ENCODE measurements at regions of chr2 and their contacts with region 1.

Region 1: DNA sequence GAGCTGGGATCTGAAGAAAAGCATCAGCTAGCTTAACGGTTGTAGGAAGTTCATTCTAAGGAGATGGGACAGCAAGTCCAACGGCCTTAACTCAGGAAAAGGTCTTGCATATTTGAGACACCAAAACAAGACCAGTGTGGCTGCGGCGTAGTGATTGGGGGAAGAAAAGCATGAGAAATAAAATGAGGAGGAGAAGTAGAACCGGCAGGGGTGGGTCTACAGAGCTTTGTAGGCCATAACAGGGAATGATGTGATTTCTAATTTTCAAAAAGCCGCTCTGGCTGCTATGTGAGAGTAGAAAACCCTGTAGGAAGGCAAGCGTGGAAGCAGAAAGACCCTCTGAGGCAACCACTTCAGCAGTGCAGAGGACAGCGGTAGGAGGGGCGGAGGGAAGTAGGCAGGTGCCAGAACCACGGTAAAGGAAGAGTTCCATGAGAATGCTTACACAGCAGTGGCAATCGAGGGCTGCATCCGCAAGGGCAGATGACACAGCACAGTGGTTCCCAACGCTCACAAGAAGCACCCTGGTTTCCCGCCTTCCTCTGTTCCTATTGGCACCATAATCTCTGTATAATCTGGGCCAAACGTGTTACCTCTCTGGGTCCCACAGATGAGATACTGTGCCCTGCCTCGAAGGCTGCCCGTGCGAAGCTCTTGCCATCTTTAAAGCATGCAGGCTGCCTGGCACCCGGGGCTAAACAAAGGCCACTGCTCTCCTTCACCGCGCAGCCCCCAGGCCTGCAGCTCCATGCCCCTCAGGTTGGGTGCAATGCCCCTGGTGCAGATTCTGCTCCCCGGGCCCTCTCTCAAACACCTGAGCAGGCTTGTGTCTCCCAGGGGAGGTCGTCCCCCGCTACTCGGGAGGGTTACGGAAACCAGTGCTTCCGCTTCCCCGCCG is 791 bp downstream of the ANKRD39 start:
- DNase-seq: no peak

Region 2: DNA sequence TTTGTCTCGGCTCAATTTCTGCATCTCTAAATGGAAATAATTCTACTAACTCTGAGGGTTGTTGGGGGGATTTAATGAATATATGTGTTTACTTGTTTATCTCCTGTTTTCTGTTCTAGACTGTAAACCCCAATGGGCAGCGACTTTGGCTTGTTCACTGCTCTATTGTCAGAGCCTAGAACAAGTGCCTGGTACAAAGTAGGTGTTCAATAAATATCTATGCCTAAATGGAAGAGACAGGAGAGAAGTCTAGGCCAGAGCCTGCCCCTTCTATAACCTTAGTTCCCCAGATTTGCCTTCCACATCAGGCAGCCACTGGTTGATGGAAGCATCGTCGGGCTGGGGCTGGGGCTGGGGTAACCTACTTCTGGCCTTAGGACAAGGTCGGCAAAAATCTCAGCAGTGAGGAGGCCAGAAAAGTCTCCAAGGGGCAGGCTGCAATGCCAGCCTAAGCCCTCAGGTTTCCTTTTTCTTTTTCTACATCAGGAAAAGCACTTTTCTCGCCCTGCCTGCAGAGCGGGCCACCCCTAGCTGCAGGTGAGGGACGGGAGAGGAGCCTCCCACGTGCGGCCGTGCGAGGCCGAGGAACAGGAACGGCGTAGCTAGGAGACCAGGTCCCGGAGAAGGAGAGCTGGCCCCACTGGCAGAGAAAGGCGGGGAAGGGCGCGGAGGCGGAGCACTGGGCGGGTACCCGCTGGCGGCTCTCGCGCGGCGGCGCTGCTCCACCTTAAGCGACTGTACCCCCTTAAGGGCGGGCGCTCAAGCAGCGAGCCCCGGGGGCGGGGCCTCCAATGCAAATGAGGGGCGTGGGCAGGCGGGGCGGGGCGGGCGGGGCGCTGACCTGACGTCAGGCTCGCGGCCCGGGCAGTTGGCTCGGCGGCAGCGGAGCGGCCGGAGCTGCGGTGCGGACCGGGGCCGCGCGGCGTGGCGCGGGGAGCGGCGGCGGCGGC is 96.7 kb before region 1 on chr2 and contains the start of gene CNNM4:
- intact Hi-C with region 1: loop called (anchors 5 kb)
- DNase-seq: peak; percentile 97
- total RNA-seq, gene CNNM4: 36.8 TPM

Region 3: DNA sequence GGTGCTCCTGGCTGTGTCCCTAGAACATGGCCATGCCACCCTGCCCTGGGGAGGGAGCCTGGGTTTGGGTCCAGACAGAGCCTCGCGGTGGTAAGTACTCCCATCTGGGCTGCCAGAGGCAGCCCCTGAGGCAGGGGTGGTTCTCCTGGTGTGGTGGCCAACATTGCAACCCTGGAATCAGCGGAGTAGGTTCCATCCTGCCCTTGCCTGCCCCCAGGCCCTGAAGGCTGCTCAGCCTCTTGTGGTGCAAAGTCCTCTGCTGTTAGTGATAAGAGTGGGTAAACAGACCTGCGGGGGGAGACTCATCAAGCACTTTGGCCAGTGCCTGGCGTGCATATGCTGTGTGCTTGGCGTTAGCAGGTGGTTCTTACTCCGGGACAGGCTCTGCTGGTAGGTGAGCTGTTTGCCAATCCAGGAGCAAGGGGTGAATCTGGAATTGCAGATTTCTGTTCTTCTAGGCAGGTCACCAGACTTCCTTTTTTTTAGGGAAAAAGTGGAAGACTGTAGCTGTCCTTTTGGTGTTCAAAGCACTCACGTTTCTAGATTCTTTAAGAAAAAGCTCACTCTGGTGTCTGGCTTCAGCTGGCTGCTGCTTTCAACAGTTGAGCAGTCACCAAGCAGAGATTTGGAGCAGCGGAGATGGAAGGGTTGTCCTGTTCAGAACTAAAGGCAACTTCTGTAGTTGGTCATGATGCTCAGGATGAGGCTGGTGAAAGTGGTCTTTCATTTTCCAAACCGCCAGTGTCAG is 37.7 kb before region 1 on chr2:
- intact Hi-C with region 1: loop called (anchors 2 kb)
- DNase-seq: no peak

Region 4: GRCh38 chr2:96951093-96951654 is 94.1 kb after region 1 on chr2:
- intact Hi-C with region 1: loop called (anchors 1 kb)
- DNase-seq: peak; percentile 88

Region 5: GRCh38 chr2:96960153-96960961 is 103.3 kb after region 1 on chr2:
- intact Hi-C with region 1: loop called (anchors 1 kb)
- DNase-seq: peak; percentile 91

Measured in cardiac septum (tissue), 1 donor.